HepG2 (cell line): ENCODE measurements at regions of chr1 and their contacts with region 1.

Region 1: DNA sequence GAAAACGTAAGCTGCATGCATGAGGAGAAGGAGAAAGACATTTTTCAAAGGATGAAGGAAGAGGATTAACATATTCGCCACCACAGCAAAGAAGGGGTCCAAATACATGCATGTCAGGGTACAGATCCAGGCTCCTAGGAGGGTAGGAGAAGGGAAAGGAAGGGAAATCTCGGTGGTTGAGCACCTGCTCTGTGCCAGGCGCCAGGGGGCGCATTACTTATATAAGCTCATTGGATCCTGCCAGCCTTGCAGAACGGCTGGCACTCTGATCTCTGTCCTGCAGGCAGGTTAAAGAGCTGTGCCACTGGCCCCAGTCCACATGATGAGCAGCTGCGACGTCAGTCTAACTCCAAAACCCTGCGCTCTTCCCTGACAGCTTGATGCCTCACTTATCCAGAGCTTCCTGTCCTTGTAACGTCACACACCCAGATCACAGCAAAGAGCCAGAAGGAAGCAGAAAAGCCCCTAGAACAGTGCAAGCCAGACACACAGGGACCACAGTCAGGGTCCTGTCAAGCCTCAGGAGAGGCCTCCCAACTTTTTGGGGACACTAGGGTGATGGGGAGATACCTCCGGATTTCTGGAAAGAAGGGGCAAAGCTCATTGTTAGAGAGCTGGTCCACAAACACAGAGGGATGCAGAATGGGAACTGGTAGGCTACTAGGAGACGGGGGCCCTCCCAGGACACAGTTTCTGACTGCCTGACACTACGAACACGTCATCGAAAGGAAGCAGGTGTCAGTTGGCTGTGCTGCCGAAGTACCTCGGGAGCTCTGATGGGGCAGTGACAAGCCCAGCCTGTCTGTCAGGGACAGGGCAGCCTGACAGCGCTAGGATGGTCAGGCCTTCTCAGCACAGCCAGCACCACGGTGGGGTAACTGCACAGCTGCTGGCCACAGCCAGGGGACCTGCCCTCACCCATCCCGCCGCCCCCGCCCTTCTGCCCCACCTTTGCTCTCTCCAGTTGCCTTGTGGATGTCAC is 99.1 kb downstream of the BEND5 start:
- DNase-seq: peak; percentile 56
- ATAC-seq: peak; percentile 91
- H3K4me3 ChIP-seq: no peak overlapping the region
- H3K27ac ChIP-seq: no peak overlapping the region
- H3K4me1 ChIP-seq: no peaks in the 10 kb centered on the region
- H3K27me3 ChIP-seq: no peaks in the 10 kb centered on the region
- CTCF ChIP-seq: peak; percentile 76
- EP300 ChIP-seq: no peak
- POLR2A ChIP-seq: no peak
- RAD21 ChIP-seq: no peak

Region 2: DNA sequence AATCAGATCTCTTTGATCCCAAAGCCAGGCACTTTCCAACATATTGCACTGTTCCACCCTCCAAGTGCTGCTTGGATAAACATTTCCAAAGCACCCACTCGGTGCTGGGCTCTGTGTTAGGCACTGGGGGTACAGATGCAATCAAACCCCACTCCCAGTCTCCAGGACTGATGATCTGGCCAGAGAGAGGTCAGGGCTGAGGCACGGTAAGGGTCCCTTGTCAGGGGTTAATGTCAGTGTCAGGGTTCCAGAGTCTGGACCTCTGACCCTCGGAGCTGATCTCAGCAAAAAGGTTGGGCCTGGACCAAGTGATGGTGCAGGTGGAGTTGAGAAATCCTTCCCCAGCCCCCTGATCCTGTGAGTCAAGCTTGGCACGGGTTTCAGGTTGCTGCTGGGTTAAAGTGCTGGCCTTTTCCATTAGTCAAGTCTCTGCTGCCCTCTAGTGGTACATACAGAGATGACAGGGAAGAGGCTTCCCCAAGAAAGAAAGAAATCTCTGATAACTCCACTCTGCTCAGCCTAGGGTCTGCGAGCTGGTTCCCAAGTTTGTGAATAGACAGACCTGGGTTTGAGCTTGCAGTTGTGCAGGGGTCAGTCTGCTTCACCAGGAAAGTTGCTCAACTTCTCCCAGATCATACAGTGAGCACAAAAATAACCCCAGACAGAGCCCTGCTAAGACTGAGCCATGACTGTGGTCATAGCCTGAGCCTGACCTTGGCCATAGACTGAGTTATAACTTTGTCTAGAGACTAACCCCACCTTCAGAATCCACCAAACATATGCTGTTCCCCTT is 1671.0 kb after region 1 on chr1:
- CTCF ChIA-PET with region 1: no interaction called
- POLR2A ChIA-PET with region 1: no interaction called
- in situ Hi-C with region 1: loop called (anchors 10 kb)
- intact Hi-C with region 1: no loop called
- DNase-seq: peak; percentile 69
- ATAC-seq: peak; percentile 88
- H3K4me3 ChIP-seq: no peak overlapping the region
- H3K27ac ChIP-seq: no peak overlapping the region
- H3K4me1 ChIP-seq: no peaks in the 10 kb centered on the region
- H3K27me3 ChIP-seq: peaks cover 2 to 15% of the 10 kb centered on the region in 2 experiments; a peak in 2 of 5 replicates
- CTCF ChIP-seq: peak; percentile 86
- EP300 ChIP-seq: no peak
- POLR2A ChIP-seq: no peak
- RAD21 ChIP-seq: peak; percentile 73; the same call in 1 of the 2 replicates